Activated CD4-positive, alpha-beta T cell treated with anti-CD3 and anti-CD28 coated beads, Interleukin-2, amount 10 ng/mL, durations not matched to agents 24 days and 14 days (primary cell): ENCODE measurements at regions of chr9 and their contacts with region 1.

Region 1: GRCh38 chr9:114738581-114739316 is 56.8 kb upstream of the TEX48 start:
- DNase-seq: peak; percentile 91
- H3K4me3 Mint-ChIP-seq: peak overlapping the region; percentile 33
- H3K27ac Mint-ChIP-seq: peak overlapping the region; percentile 93
- H3K4me1 Mint-ChIP-seq: peaks cover 63% of the 10 kb centered on the region
- H3K27me3 Mint-ChIP-seq: no peaks in the 10 kb centered on the region

Region 2: DNA sequence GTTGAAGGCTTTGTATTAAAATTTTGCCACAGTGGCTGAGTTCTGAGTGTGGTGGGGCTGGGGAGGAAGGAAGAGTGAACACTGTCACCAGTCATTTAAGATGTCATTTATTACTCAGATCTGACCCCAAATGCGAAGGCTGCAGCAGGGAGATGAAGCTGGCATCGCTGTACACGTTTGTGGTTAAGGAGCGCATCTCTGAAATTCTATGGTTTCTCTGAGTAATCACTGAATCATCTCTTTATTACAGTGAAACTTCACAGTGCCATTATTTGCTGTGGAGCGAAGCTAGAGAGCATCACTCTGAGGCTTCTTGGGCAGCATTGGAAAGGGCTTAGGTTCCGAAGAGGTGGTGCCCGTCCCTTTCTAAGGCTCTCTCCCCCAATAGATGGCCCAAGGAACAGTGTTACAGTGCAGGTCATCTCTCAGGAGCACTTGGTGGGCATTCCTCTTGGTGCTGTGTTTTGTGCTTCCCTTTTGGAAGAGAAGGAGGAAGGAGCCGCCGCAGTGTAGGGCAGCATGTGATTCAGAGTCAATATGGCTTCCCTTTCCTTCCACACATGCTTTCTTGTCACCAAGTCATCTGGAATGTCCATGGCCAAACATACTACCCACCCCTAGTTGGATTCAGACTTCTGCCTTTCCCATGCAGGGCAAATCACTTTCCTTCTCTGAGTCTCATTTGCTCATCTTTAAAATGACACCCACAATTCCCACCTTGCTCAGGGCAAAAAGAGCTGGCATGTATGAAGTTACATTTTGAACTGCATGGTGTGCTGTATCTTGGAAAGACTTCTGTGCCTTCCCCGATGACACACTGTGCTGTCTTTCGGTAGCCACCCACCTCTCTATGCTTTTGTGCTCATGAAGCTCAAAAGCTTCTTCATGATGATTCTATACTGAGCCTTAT is 47.4 kb before region 1 on chr9:
- intact Hi-C with region 1: loop called (anchors 2 kb)
- DNase-seq: peak; percentile 93
- H3K4me3 Mint-ChIP-seq: peak overlapping the region; percentile 59
- H3K27ac Mint-ChIP-seq: peak overlapping the region; percentile 97
- H3K4me1 Mint-ChIP-seq: peaks cover 80% of the 10 kb centered on the region
- H3K27me3 Mint-ChIP-seq: no peaks in the 10 kb centered on the region

Region 3: DNA sequence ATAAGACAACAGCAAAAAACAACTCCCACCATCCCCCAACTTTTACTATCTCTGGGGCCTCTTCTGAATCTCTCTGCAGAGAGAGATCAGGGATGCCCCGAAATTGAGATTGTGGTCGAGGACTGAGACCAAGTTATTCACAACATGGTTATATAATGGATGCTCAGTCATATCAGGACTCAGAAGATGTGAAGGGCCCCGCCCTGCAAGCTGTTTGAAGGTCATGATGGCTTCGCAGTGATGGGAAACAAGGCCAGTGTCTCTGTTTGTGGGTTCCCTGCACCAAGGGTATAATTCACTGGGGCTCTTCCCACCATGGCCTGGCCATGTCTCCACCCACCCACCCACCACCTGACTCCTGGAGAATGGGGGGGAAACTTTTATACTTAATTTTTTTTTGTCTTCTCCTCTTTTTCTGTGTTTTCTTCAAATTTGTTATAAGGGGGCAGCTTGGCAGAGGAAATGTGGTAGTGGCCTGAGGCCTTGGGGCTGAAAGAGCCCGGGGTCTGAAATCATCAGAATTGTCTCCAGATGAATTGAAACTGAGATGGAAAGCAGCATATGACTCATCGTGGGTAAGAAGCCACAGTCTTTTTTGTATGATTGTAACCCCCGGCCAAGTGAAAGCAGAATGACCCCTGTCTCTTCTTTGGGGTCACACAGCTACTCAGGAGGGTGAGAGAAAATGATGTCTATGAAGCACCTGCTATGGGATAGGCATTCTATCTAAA is 41.8 kb before region 1 on chr9:
- intact Hi-C with region 1: loop called (anchors 1 kb)
- DNase-seq: peak; percentile 92
- H3K4me3 Mint-ChIP-seq: peak overlapping the region; percentile 79
- H3K27ac Mint-ChIP-seq: peak overlapping the region; percentile 100
- H3K4me1 Mint-ChIP-seq: peaks cover 79% of the 10 kb centered on the region
- H3K27me3 Mint-ChIP-seq: no peaks in the 10 kb centered on the region

Region 4: DNA sequence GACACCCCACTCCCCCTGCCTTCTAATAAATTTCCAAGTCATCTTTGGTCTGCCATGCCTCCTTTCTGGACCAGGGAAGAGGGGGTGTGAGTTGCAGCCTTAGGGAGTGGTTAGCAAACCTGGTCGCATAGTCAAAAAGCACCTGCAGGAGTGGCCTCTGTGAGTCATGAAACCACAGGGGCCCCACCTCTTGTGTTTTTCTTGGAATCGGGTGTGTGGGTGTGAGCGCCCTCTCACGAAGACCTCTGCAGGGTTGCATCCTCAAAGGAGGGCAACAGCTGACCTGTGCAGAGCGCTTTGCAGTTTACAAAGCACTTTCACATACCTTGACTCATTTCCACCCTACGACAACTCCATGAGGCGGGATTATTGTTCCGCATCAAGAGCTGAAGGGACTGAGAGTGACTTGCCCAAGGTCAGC is 19.9 kb before region 1 on chr9:
- intact Hi-C with region 1: loop called (anchors 1 kb)
- DNase-seq: peak; percentile 98
- H3K4me3 Mint-ChIP-seq: peak overlapping the region; percentile 74
- H3K27ac Mint-ChIP-seq: peak overlapping the region; percentile 97
- H3K4me1 Mint-ChIP-seq: peaks cover 81% of the 10 kb centered on the region
- H3K27me3 Mint-ChIP-seq: no peaks in the 10 kb centered on the region

Region 5: GRCh38 chr9:115013998-115014397 is 275.2 kb after region 1 on chr9:
- intact Hi-C with region 1: loop called (anchors 1 kb)
- DNase-seq: peak; percentile 93
- H3K4me3 Mint-ChIP-seq: peak overlapping the region; percentile 18
- H3K27ac Mint-ChIP-seq: peak overlapping the region; percentile 77
- H3K4me1 Mint-ChIP-seq: peaks cover 55% of the 10 kb centered on the region
- H3K27me3 Mint-ChIP-seq: peaks cover 2% of the 10 kb centered on the region